Heart right ventricle (tissue), 16 donors: ENCODE measurements at regions of chr3 and their contacts with region 1.

Region 1: GRCh38 chr3:41198950-41199865 is at the start of gene CTNNB1:
- DNase-seq: peak; percentile 93 to 95
- ATAC-seq: peak; percentile 87 to 98 (median 93)
- H3K4me3 ChIP-seq: peak within 1 kb of the TSS; percentile 63 to 96 (median 80)
- H3K27ac ChIP-seq: peak within 1 kb of the TSS; percentile 89 to 99 (median 98)
- H3K4me1 ChIP-seq: peaks cover 0 to 42% (median 35%) of the 10 kb centered on the region in 9 donors
- H3K27me3 ChIP-seq: no peaks in the 10 kb centered on the region
- CTCF ChIP-seq: peak in 6 of 9 donors; percentile 7 to 43 (median 23)
- total RNA-seq, gene CTNNB1: 148 to 218 (median 181) TPM

Region 2: GRCh38 chr3:40770061-40770460 is 429.1 kb before region 1 on chr3:
- intact Hi-C with region 1: loop called in 2 of 10 experiments (anchors 5 to 10 kb)
- DNase-seq: no peak
- ATAC-seq: peak in 6 of 8 donors; percentile 40 to 77 (median 57)
- H3K4me3 ChIP-seq: no peak overlapping the region
- H3K27ac ChIP-seq: peak overlapping the region in 6 of 10 donors; percentile 31 to 57 (median 46)
- H3K4me1 ChIP-seq: peaks cover 0 to 31% (median 14%) of the 10 kb centered on the region in 9 donors
- H3K27me3 ChIP-seq: peaks cover 0 to 5% (median 0%) of the 10 kb centered on the region in 7 donors
- CTCF ChIP-seq: no peak

Region 3: DNA sequence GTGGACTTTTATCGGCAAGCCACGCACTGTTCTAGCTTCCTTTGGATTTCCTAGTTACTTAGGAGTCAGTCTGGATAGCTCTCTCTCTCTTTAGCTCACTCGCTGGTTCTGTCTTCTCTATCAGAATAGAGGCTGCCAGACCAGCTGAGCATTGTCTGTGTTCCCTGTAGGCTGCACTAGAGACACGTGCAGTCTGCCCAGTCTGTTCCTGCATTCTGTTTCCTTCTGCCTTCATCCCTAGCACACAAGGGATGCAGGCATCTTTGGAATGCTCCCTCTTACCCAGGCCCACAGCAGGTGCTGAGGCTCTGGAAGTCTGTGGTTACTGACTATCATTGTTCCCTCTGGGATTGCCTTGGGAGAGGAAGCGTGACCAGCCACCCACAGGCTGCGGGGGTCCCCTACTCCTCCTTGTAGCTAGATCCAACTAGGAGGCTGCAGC is 351.6 kb before region 1 on chr3:
- intact Hi-C with region 1: loop called in 2 of 10 experiments (anchors 5 to 10 kb)
- DNase-seq: peak in 1 of 2 donors; percentile 38
- ATAC-seq: peak; percentile 74 to 93 (median 89)
- H3K4me3 ChIP-seq: no peak overlapping the region
- H3K27ac ChIP-seq: no peak overlapping the region
- H3K4me1 ChIP-seq: peaks cover 0 to 28% (median 10%) of the 10 kb centered on the region in 9 donors
- H3K27me3 ChIP-seq: no peaks in the 10 kb centered on the region
- CTCF ChIP-seq: peak in 7 of 9 donors; percentile 27 to 64 (median 36)

Region 4: DNA sequence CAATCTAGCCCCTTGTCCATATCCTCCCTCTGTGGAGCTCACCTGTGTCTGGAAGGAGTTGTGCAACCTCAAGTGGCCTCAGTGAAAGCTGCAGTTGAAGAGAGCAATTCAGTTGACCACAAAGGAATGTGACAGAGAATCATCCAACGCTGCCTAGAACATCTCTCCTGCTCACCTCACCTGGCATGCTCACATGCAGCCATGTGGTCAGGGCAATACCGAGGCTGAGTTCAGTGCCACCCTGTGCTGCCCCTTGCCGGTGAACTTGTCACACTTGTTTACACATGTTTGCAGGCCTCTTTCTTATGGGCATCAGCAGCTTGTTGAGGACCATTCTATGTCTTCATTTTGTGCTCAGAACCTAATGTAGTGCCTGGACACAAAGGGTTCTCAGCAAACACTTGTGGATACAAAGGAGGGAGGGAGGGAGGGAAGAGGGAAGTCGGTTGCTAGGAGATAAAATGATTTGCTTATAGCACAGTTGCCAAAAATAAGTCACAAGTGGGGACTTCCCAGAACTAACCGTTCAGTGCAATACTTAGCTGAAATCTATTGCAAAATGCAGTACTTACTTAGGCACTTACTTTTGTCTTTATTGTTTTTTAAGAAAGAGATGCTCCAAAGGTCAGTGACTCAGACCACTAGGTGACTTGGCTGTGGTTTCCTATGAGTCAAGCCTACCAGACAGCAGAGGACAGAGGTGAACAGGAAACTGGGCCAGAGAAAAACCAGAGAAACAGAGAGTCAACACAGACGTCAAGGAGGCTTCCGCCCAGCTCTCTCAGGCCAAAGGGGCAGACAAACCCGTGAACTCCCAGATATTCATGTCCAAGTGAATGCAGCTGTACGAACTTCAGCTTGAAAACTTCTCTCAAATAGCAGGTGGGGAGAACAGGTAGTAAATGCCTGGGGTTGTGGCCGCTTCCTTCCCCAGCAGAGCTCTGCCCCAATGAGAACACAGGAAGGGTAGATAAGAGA is 227.7 kb before region 1 on chr3:
- intact Hi-C with region 1: loop called in 6 of 10 experiments (anchors 2 to 10 kb)
- DNase-seq: peak; percentile 44 to 87
- ATAC-seq: peak; percentile 81 to 97 (median 90)
- H3K4me3 ChIP-seq: peak overlapping the region in 1 of 10 donors; percentile 1
- H3K27ac ChIP-seq: peak overlapping the region; percentile 20 to 85 (median 78)
- H3K4me1 ChIP-seq: peaks cover 19 to 64% (median 58%) of the 10 kb centered on the region in 9 donors
- H3K27me3 ChIP-seq: no peaks in the 10 kb centered on the region
- CTCF ChIP-seq: peak in 1 of 9 donors; percentile 17

Region 5: GRCh38 chr3:41117398-41117870 is 81.8 kb before region 1 on chr3:
- intact Hi-C with region 1: loop called in 2 of 10 experiments (anchors 5 kb)
- DNase-seq: peak; percentile 88 to 90
- ATAC-seq: peak; percentile 89 to 96 (median 94)
- H3K4me3 ChIP-seq: peak overlapping the region in 2 of 10 donors; percentile 4 to 8
- H3K27ac ChIP-seq: peak overlapping the region in 8 of 10 donors; percentile 37 to 81 (median 58)
- H3K4me1 ChIP-seq: peaks cover 3 to 45% (median 28%) of the 10 kb centered on the region in 9 donors
- H3K27me3 ChIP-seq: no peaks in the 10 kb centered on the region
- CTCF ChIP-seq: peak in 1 of 9 donors; percentile 14